ENCODE measurements at regions of chr5 and their contacts with region 1.

Region 1: DNA sequence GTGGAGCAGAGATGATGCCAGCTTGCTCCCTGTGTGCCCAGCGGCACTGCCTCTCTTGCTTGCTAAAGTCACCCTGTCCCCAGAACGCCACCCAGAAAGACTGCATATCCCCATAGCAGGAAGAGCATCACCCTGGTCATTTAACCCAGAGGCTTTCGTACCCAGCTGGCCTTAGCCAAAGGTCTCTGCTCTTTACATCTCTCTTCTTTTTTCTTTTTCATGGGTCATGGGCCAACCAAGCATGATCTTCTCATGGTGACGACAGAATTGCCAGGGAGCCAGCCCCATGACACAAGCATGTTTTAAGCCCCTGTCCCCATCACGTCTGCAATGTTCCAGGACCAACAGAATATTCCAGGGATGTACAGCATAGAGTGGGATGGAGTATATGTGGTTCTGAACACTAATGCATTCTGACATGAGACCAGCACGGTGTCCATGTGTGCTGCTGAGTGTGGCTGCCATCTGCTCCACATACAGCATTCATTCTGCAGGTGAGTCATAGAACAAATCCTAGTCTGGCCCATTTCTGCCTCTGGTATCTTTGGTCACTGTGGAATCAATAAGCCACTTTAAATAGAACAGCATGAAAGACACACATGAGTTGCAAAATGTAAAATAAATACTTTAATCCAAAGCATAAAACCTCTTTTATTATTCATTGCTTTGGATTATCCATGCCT is 203.0 kb downstream of the MED10 start:
- DNase-seq: no peak
- H3K4me3 ChIP-seq: no peak overlapping the region
- H3K27ac ChIP-seq: no peak overlapping the region
- H3K4me1 ChIP-seq: no peaks in the 10 kb centered on the region
- H3K27me3 ChIP-seq: no peaks in the 10 kb centered on the region
- CTCF ChIP-seq: no peak
- POLR2A ChIP-seq: no peak

Region 2: GRCh38 chr5:6188344-6188743 is 13.0 kb after region 1 on chr5:
- intact Hi-C with region 1: loop called (anchors 1 kb)
- DNase-seq: no peak
- H3K4me3 ChIP-seq: no peak overlapping the region
- H3K27ac ChIP-seq: no peak overlapping the region
- H3K4me1 ChIP-seq: no peaks in the 10 kb centered on the region
- H3K27me3 ChIP-seq: no peaks in the 10 kb centered on the region
- CTCF ChIP-seq: no peak
- POLR2A ChIP-seq: no peak

Measured in breast epithelium (tissue), 4 donors.